Heart left ventricle (tissue), 16 donors: ENCODE measurements at regions of chr5 and their contacts with region 1.

Region 1: DNA sequence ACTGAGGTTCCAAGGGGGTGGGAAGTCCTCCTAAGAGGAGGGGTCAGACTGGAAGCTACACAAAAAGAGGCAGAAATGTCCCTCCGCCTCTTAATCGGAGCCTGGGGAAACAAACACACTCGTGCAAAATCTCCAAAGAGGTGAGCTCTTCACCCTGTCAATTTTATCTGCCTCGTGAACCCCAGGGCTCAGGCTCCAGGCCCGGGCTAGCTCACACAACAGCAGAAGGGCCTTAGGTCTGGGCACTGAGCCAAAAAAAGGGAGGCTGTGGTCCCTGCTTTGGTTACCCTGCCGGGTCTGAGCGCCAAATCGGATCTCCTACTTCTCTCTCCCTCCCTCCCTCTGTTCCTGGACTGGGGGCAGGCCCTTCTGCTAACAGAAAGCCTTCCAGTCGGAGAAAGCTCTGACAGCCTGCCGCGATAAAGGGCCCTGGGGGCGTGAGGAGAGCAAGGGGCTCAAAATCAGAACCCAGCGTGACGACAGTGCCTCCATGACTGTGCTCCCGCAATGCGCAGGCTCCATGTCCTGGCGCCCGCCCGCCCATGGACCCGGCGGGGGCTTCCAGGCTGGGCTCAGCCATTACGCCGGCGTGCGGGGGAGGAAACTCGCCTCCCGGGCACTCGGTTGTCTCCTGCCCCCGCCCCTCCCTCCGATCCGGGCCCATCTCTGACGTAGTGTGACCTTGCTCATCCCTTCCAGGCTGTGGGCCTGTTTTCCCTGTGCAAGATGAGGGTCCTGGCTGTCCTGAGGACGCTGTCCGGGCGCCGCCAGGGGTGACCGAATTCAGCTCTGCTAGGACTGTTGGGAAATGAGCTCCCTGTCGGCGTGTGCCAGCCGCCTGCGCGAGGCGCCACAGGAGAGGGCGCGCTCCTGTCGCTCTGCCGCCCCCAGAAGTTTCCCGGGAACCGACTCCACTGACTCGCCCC is 865 bp upstream of the SLC22A4 start:
- DNase-seq: peak; percentile 91 to 94 (median 93)
- ATAC-seq: peak; percentile 72 to 83 (median 78)
- H3K4me3 ChIP-seq: peak overlapping the region; percentile 28 to 82 (median 68)
- H3K27ac ChIP-seq: peak overlapping the region; percentile 89 to 99 (median 97)
- H3K4me1 ChIP-seq: peaks cover 3 to 44% (median 24%) of the 10 kb centered on the region in 12 donors
- H3K27me3 ChIP-seq: no peaks in the 10 kb centered on the region
- CTCF ChIP-seq: peak in 4 of 12 donors; percentile 8 to 41 (median 34)
- POLR2A ChIP-seq: no peak

Region 2: DNA sequence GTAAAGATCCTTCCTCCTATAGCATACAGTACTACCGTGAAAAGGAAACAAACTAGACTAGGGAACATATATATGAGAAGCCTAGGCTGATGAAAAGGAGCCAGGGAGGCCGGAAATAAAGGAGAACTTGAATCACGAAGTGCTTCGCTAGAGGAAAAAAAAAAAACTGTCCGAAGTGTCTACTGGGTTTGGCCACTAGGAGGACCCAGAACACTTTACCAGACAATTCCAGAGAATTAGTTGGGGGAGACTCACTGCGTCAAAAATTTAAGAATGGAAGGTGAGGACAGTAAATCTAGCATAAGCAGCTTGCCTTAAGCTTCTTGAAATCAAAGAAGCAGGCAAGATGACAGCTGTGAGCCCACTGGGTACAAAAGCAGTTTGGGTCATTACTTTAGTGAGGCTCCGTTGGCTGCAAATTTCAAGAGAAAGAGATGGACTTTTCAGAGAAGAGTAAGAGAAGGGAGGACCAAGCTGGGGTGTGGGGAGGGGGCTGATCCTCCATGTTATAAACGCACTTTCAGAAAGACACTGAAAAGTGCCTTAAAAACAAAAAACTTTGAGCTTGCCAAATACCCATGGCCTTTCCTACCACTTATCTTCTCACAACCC is 113.1 kb before region 1 on chr5:
- intact Hi-C with region 1: loop called in 2 of 10 experiments (anchors 10 kb)
- DNase-seq: no peak
- ATAC-seq: peak in 2 of 4 donors; percentile 58 to 64
- H3K4me3 ChIP-seq: no peak overlapping the region
- H3K27ac ChIP-seq: no peak overlapping the region
- H3K4me1 ChIP-seq: peaks cover 0 to 18% (median 3%) of the 10 kb centered on the region in 12 donors
- H3K27me3 ChIP-seq: no peaks in the 10 kb centered on the region
- CTCF ChIP-seq: peak; percentile 53 to 81 (median 71)
- POLR2A ChIP-seq: no peak

Region 3: GRCh38 chr5:132227485-132228240 is 65.7 kb before region 1 on chr5 and contains the start of gene P4HA2:
- intact Hi-C with region 1: loop called in 2 of 10 experiments (anchors 5 kb)
- DNase-seq: peak; percentile 84 to 91 (median 89)
- ATAC-seq: peak; percentile 63 to 89 (median 82)
- H3K4me3 ChIP-seq: peak within 1 kb of the TSS; percentile 67 to 98 (median 86)
- H3K27ac ChIP-seq: peak within 1 kb of the TSS; percentile 84 to 98 (median 94)
- H3K4me1 ChIP-seq: peaks cover 10 to 59% (median 47%) of the 10 kb centered on the region in 12 donors
- H3K27me3 ChIP-seq: peaks cover 0 to 8% (median 0%) of the 10 kb centered on the region in 9 donors
- CTCF ChIP-seq: peak in 5 of 12 donors; percentile 18 to 37 (median 30)
- POLR2A ChIP-seq: peak in 1 of 2 donors; percentile 71
- total RNA-seq, gene P4HA2: 41.2 to 80.7 (median 55.7) TPM

Region 4: GRCh38 chr5:132363431-132364112 is 70.2 kb after region 1 on chr5:
- intact Hi-C with region 1: loop called in 7 of 10 experiments (anchors 2 to 10 kb)
- DNase-seq: peak in 4 of 5 donors; percentile 54 to 76 (median 55)
- ATAC-seq: peak; percentile 86 to 93 (median 88)
- H3K4me3 ChIP-seq: no peak overlapping the region
- H3K27ac ChIP-seq: peak overlapping the region; percentile 58 to 92 (median 74)
- H3K4me1 ChIP-seq: peaks cover 0 to 34% (median 17%) of the 10 kb centered on the region in 12 donors
- H3K27me3 ChIP-seq: no peaks in the 10 kb centered on the region
- CTCF ChIP-seq: no peak
- POLR2A ChIP-seq: no peak

Region 5: DNA sequence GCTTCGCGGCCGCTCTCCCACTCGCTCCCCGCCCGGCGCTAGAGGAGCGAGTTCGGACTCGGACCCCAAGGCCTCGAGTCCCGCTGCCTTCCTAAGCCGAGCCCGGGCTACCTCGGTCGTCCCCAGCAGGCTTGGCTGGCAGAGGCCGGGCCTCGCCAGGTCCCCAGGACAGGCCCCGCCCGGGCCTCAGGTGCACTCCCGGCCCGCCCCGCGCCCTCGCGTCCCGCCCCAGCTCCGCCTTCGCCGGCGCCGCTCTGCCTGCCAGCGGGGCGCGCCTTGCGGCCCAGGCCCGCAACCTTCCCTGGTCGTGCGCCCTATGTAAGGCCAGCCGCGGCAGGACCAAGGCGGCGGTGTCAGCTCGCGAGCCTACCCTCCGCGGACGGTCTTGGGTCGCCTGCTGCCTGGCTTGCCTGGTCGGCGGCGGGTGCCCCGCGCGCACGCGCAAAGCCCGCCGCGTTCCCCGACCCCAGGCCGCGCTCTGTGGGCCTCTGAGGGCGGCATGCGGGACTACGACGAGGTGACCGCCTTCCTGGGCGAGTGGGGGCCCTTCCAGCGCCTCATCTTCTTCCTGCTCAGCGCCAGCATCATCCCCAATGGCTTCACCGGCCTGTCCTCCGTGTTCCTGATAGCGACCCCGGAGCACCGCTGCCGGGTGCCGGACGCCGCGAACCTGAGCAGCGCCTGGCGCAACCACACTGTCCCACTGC is 76.3 kb after region 1 on chr5 and contains the start of gene SLC22A5:
- intact Hi-C with region 1: loop called in 6 of 10 experiments (anchors 2 to 10 kb)
- DNase-seq: peak; percentile 56 to 83 (median 75)
- ATAC-seq: peak; percentile 62 to 91 (median 82)
- H3K4me3 ChIP-seq: peak within 1 kb of the TSS; percentile 66 to 90 (median 78)
- H3K27ac ChIP-seq: peak within 1 kb of the TSS; percentile 64 to 94 (median 88)
- H3K4me1 ChIP-seq: peaks cover 0 to 42% (median 22%) of the 10 kb centered on the region in 12 donors
- H3K27me3 ChIP-seq: no peaks in the 10 kb centered on the region
- CTCF ChIP-seq: no peak
- POLR2A ChIP-seq: peak in 1 of 2 donors; percentile 50
- total RNA-seq, gene SLC22A5: 7.5 to 42.5 (median 13.5) TPM

Region 6: DNA sequence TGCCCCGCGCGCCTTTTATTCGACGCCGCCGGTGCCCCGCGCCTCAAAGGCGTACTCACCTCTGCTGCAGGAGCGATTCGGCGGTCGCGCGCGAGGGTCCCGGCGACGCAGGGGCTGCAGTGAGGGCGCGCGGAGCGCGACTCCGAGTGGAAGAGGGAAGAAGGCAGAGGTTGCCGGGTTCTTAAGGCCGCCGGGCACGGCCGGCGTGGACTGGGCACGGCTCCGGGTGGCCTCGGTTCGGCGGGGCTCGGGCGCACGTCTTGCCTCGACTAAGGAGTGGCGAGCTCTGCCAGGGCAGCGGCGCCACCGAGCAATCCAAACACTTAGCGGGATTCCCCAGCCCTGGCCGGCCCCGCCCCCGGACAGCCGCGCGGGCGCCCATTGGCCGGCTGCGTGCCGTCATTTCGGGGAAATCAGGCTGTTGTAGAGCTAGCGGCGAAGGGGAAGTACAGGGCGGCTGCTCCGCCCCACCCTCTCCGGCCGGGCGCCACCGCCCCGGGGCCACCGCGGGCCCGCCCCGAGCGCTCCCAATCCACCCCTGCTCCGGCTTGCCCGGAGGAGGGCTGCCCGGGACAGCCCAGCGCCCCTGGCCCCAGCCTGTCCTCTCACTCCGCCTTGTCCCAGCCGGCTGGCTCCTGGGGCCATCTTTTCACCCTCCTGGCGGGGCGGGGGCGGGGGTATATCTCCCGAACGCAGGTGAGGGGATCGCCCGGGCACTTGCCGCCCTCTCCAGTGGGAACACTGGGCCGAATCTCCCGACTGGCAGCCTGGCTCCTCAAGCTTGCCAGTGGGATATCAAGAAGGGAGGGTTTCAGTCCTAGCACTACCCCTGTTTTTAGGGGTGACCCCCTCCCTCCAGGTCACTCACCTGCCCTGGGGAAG is 197.4 kb after region 1 on chr5 and contains the start of gene IRF1:
- intact Hi-C with region 1: loop called in 3 of 10 experiments (anchors 5 to 10 kb)
- DNase-seq: peak; percentile 97 to 98 (median 98)
- ATAC-seq: peak; percentile 87 to 94 (median 92)
- H3K4me3 ChIP-seq: peak within 1 kb of the TSS; percentile 63 to 97 (median 86)
- H3K27ac ChIP-seq: peak within 1 kb of the TSS; percentile 94 to 100 (median 98)
- H3K4me1 ChIP-seq: peaks cover 12 to 81% (median 61%) of the 10 kb centered on the region in 12 donors
- H3K27me3 ChIP-seq: no peaks in the 10 kb centered on the region
- CTCF ChIP-seq: peak in 2 of 12 donors; percentile 12 to 45
- POLR2A ChIP-seq: peak; percentile 53 to 96
- total RNA-seq, gene IRF1: 9.2 to 190 (median 18.4) TPM

Region 7: GRCh38 chr5:132495667-132496190 is 202.4 kb after region 1 on chr5:
- intact Hi-C with region 1: loop called in 3 of 10 experiments (anchors 5 to 10 kb)
- DNase-seq: peak; percentile 93 to 96 (median 95)
- ATAC-seq: peak; percentile 69 to 80 (median 76)
- H3K4me3 ChIP-seq: peak overlapping the region; percentile 27 to 88 (median 68)
- H3K27ac ChIP-seq: peak overlapping the region; percentile 79 to 99 (median 93)
- H3K4me1 ChIP-seq: peaks cover 4 to 92% (median 44%) of the 10 kb centered on the region in 12 donors
- H3K27me3 ChIP-seq: no peaks in the 10 kb centered on the region
- CTCF ChIP-seq: peak in 5 of 12 donors; percentile 9 to 38 (median 24)
- POLR2A ChIP-seq: peak in 1 of 2 donors; percentile 52